ENCODE measurements at regions of chr22 and their contacts with region 1.

Region 1: GRCh38 chr22:44697423-44698141 is 4.4 kb upstream of the PRR5 start:
- DNase-seq: peak; percentile 68 to 87 (median 78)
- H3K4me3 ChIP-seq: no peak overlapping the region
- H3K27ac ChIP-seq: peak overlapping the region in 1 of 5 donors; percentile 74
- H3K4me1 ChIP-seq: peaks cover 0 to 3% of the 10 kb centered on the region in 2 donors
- H3K27me3 ChIP-seq: no peaks in the 10 kb centered on the region
- CTCF ChIP-seq: peak; percentile 88 to 96 (median 90)
- POLR2A ChIP-seq: no peak

Region 2: GRCh38 chr22:44625981-44626687 is 71.4 kb before region 1 on chr22:
- intact Hi-C with region 1: no loop called
- DNase-seq: peak; percentile 52 to 87 (median 70)
- H3K4me3 ChIP-seq: no peak overlapping the region
- H3K27ac ChIP-seq: no peak overlapping the region
- H3K4me1 ChIP-seq: no peaks in the 10 kb centered on the region
- H3K27me3 ChIP-seq: peaks cover 6% of the 10 kb centered on the region
- CTCF ChIP-seq: peak; percentile 98 to 100 (median 99)
- POLR2A ChIP-seq: peak in 1 of 2 donors; percentile 10

Region 3: DNA sequence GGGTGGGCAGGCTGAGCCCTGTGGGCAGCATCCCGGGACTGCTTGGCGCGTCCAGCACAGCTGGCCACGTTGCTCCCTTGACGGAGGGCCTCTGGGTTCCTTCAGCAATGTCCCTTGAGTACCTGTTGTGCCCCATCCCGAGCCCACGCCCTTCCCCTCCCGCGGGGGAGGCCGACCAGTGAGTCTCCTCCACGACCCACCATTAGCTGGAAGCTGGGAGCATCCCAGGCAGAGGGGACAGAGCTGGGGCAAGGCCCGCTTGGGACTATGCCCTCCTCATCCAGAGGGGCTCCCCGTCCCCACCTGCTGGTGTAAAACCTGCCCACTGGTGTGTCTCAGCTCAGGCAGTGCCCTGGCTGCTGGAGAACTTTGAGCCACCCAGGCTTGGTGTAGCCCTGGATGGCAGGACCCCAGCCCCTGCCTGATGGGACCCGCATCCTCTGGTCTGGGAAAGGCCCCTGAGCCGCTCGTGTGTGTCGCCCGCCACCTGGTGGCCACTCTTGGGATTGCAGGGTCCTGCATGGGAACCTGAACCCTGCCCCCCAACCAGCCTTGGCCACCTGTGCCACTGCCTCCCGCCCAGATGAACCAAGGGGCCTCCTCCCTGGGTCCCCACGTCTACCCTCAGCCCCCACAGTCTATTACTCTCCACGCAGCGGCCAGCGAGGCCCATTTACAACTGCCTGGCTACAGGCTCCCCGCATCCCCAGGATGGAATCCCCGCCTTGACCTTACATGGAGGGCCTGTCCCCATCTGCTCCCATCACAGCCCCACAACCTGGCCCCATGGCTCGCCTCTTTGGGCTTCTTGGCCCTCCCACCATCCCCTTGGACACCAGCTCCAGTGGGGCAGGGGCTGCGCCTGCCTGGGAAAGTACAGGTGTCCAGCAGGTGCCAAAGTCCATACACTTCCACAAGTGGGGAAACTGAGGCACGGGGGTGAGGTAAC is 38.2 kb after region 1 on chr22:
- intact Hi-C with region 1: loop called (anchors 2 kb)
- DNase-seq: peak; percentile 62 to 86 (median 80)
- H3K4me3 ChIP-seq: no peak overlapping the region
- H3K27ac ChIP-seq: no peak overlapping the region
- H3K4me1 ChIP-seq: no peaks in the 10 kb centered on the region
- H3K27me3 ChIP-seq: peaks cover 8% of the 10 kb centered on the region
- CTCF ChIP-seq: peak; percentile 91 to 100 (median 95)
- POLR2A ChIP-seq: no peak

Measured in adrenal gland (tissue), 19 donors.